Activated B cell treated with CpG ODN at 0.5 μM for 24 hours (primary cell): ENCODE measurements at regions of chr22 and their contacts with region 1.

Region 1: DNA sequence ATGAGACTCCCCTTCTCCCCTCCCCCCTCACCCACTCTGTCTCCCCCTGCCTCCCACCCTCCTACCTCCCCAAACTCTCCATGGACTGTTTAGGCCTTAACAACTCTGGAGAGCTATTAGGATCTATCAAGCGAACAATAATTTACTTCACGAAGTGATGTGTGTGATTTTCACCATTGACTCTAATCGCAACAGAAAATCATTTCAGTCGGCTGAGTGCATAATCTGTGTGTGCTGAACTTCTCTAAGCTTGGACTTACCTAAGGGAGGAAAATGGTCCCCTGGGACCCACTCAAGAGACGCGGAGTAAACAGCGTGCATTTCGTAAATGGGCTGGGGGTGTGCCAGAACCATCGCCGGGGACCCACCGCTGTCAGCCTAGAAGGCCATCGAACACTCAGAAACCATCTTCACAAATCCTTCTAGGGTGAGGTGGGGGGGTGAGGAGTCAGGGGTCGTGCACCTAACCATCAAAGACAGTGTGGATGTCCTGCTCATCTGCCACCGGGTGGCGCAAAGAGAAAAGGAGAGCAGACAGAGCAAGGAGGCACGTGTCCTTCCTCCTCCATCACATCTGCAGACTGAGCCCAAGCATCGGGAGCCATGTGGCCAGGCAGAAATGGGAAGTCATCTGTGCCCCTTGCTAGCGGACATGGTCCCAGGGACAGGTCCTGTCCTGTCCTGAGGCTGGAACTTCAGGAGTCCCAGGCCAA is 62.1 kb upstream of the NUP50 start:
- DNase-seq: no peak
- ATAC-seq: no peak
- H3K4me3 Mint-ChIP-seq: no peak overlapping the region
- H3K27ac Mint-ChIP-seq: no peak overlapping the region
- H3K4me1 Mint-ChIP-seq: peaks cover 3% of the 10 kb centered on the region
- H3K27me3 Mint-ChIP-seq: peaks cover 17% of the 10 kb centered on the region
- CTCF ChIP-seq: no peak

Region 2: DNA sequence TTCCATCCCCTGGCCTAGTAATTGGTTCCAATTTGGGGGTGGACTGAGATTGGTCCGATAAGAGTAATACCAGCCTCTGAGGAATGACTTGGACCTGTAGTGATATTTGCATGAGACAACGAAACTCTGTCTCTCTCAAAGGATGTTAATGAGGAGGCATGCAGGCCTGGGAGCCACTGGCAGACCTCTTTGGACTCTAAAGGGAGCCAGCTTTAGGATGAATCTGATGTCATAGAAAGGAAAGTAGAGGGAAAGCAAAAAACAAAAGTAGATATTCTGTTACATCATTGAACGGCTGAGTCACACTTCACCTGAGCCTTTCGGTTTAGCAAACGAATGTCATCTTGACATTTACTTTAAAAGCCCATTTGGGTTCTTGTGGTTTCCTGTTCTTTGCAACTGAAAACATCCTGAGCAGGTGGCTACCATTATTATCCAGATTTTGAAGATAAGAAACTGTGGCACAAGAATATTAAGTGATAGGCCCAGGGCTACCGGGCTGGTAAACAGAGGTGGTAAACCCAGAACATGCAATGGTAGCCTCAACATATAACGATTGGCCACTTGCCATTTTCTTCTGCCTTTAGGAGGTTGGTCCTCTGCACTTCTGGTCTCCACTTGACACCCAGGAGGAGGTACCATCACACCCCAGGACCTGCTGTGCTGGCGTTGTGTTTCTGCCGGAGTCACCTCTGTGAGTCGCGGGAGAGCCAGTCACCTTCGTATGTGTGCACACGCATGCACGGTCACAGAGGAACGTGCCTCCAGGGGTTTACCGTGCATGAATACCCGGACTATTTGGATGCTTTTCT is 646.3 kb before region 1 on chr22:
- CTCF ChIA-PET with region 1: no interaction called
- POLR2A ChIA-PET with region 1: no interaction called
- intact Hi-C with region 1: no loop called
- DNase-seq: no peak
- ATAC-seq: no peak
- H3K4me3 Mint-ChIP-seq: no peak overlapping the region
- H3K27ac Mint-ChIP-seq: no peak overlapping the region
- H3K4me1 Mint-ChIP-seq: peaks cover 12% of the 10 kb centered on the region
- H3K27me3 Mint-ChIP-seq: no peaks in the 10 kb centered on the region
- CTCF ChIP-seq: no peak

Region 3: DNA sequence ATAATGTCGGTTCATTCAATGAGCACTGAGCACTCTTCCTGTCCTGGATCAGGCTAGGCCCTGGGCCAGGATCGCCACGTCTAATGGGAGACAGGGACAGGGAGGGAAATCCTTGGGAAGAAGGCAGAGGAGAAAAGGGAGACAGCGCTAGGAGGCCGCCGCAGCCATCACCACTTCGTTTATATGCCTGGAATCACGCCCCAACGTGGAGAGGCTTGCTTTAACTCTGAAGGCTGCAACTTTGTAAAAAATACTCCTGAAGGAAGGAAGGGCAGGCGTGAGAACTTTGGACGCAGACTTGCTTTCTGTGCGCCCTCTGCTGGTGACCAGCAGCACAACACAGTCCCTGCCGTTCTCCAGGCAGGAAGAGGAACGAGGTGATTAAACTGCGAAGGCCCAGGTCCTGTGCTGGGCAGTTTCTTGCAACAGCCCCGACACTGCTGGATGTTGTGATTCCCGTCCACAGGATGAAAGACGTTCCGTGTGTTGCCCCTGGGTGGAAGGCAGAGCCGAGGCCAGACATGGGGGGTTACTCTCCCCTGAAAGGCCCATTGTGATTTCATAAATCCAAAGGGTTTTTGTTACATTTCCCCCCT is 334.0 kb after region 1 on chr22:
- CTCF ChIA-PET with region 1: no interaction called
- POLR2A ChIA-PET with region 1: no interaction called
- intact Hi-C with region 1: loop called (anchors 1 kb)
- DNase-seq: peak; percentile 71
- ATAC-seq: peak; percentile 98
- H3K4me3 Mint-ChIP-seq: no peak overlapping the region
- H3K27ac Mint-ChIP-seq: no peak overlapping the region
- H3K4me1 Mint-ChIP-seq: peaks cover 15% of the 10 kb centered on the region
- H3K27me3 Mint-ChIP-seq: peaks cover 2% of the 10 kb centered on the region
- CTCF ChIP-seq: peak; percentile 55